CD8-positive, alpha-beta T cell (primary cell): ENCODE measurements at regions of chr15 and their contacts with region 1.

Region 1: DNA sequence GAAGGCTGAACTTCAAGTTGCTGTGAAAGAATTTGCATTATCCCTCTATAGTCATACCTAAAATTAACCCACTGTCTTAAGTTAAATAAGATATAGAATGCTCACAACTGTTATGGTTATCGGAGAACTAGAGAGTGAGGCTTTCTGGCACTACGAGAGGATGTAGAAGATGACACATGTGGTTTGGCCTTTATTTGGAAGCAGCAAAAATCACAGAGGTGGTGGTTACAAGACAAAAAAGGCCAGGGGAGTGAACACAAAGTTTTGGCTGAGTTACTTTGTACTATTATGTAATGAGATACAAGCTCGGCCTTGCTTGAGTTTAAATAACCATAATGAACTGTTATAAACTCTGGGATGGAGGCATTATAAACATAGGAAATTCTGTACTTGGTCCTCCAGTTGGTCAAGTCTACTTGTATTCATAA is 78.3 kb upstream of the ICE2 start:
- DNase-seq: peak in 3 of 9 experiments; percentile 31 to 72 (median 57)
- ATAC-seq: peak; percentile 81
- H3K4me3 ChIP-seq: no peak overlapping the region
- H3K4me3 Mint-ChIP-seq: peak overlapping the region; percentile 42
- H3K27ac ChIP-seq: peak overlapping the region; percentile 4 to 57
- H3K27ac Mint-ChIP-seq: peak overlapping the region; percentile 85
- H3K4me1 ChIP-seq: peaks cover 57% of the 10 kb centered on the region
- H3K4me1 Mint-ChIP-seq: peaks cover 78% of the 10 kb centered on the region
- H3K27me3 ChIP-seq: no peaks in the 10 kb centered on the region
- H3K27me3 Mint-ChIP-seq: no peaks in the 10 kb centered on the region
- CTCF ChIP-seq: no peak

Region 2: GRCh38 chr15:60568301-60568742 is 11.1 kb after region 1 on chr15:
- CTCF ChIA-PET with region 1: interaction called, 5 read pairs
- POLR2A ChIA-PET with region 1: interaction called, 6 read pairs
- intact Hi-C with region 1: loop called in 1 of 2 experiments (anchors 1 kb)
- DNase-seq: peak in 1 of 9 experiments; percentile 41
- ATAC-seq: no peak
- H3K4me3 ChIP-seq: no peak overlapping the region
- H3K4me3 Mint-ChIP-seq: peak overlapping the region; percentile 27
- H3K27ac ChIP-seq: peak overlapping the region in 1 of 2 experiments; percentile 68
- H3K27ac Mint-ChIP-seq: peak overlapping the region; percentile 80
- H3K4me1 ChIP-seq: peaks cover 93% of the 10 kb centered on the region
- H3K4me1 Mint-ChIP-seq: peaks cover 93% of the 10 kb centered on the region
- H3K27me3 ChIP-seq: no peaks in the 10 kb centered on the region
- H3K27me3 Mint-ChIP-seq: no peaks in the 10 kb centered on the region
- CTCF ChIP-seq: no peak